Activated naive CD4-positive, alpha-beta T cell treated with anti-CD3 and anti-CD28 coated beads for 36 hours (primary cell): ENCODE measurements at regions of chr3 and their contacts with region 1.

Region 1: DNA sequence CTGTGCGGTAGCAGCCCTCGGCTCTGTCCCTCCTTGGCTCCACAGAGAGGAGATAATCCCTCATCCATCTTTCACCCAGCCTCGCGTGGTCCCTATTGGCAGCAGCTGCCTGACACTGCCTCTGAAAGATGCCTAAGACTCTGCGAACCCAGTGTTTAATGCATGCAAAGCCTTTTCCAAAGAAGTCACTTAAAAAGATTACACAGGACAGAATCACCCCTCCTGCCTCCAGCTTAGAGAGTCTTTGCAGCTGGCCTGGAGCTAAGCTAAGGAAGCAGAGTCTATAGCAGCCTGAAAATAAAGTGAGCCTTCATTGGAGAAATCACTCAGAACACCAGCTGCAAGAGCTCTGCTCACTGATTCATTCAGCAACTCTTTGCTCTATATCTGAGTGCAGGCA is 247.2 kb downstream of the SHQ1 start:
- DNase-seq: no peak
- H3K4me3 Mint-ChIP-seq: no peak overlapping the region
- H3K27ac Mint-ChIP-seq: no peak overlapping the region
- H3K4me1 Mint-ChIP-seq: no peaks in the 10 kb centered on the region
- H3K27me3 Mint-ChIP-seq: no peaks in the 10 kb centered on the region

Region 2: DNA sequence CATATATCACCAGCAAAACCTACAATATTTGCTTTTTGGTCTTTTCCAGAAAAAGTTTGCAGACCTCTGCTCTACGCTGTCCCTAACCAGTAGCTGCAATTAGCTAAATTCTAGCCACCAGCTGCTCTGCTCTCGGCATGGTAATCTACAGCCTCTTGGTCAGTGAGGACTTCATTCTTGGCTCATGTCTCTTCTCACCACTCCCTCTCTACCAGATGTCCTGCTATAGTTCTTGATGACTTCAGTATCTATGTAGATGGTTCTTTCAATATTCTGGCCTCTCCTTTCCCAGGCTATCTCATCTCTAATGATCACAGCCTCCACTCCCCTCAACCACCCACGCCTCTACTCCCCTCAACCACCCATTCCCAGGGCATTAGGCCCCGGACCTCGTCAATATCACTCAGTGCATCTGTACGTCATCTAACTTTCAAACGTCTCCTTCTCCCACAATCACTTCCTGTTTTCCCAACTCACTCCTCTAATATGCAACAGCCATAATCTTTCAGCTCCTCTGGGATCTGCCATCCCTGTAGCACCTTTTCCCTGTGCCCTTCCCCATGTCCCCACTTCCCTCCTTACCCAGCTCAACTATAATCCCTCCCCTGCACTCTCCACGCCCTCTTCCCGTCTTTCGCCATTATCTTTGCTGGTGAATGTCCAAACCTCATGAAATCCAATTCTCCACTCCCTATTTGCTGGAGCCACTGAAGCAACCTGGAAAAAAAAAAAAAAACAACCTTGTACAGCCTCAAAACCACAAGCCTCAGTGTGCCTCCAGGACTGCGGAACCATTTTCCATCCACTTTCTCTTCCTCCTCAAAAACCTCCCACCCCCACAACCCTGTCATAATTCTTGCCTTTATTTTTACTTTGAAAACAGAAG is 386.8 kb before region 1 on chr3:
- CTCF ChIA-PET with region 1: no interaction called
- intact Hi-C with region 1: loop called (anchors 10 kb)
- DNase-seq: no peak
- H3K4me3 Mint-ChIP-seq: no peak overlapping the region
- H3K27ac Mint-ChIP-seq: no peak overlapping the region
- H3K4me1 Mint-ChIP-seq: peaks cover 4% of the 10 kb centered on the region
- H3K27me3 Mint-ChIP-seq: peaks cover 4% of the 10 kb centered on the region